ENCODE measurements at regions of chr17 and their contacts with region 1.

Region 1: GRCh38 chr17:77208217-77208808 is 67.5 kb downstream of the SEC14L1 start:
- DNase-seq: no peak
- ATAC-seq: peak; percentile 71

Region 2: GRCh38 chr17:77088455-77089123 is 119.7 kb before region 1 on chr17:
- intact Hi-C with region 1: loop called (anchors 2 kb)
- DNase-seq: peak; percentile 94
- ATAC-seq: peak; percentile 94

Measured in Right ventricle myocardium inferior (tissue), 1 donor.